ENCODE measurements at regions of chr1 and their contacts with region 1.

Region 1: DNA sequence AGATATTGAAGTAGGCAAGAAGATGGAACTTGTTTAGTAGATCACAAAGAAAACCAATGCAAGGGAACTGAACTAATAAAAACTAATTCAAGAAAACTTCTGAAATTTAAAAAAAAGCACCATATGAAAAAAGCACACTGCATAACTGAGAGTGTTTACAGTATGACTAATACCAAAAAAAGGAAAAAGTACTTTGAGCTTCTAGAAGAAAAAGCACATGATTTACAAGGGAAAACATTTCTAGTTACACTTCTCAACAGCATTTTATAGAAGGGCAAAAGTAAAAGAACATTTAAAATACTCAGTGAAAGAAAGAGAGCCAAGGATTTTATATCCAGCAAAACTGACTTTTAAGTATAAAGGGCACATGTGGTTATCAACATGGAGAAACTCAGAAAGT is 233.6 kb downstream of the RPS6KC1 start:
- DNase-seq: peak; percentile 74
- ATAC-seq: peak; percentile 81
- H3K4me3 ChIP-seq: no peak overlapping the region
- H3K27ac ChIP-seq: peak overlapping the region; percentile 50; the same call in 1 of the 2 replicates
- H3K4me1 ChIP-seq: peaks cover 7% of the 10 kb centered on the region
- H3K27me3 ChIP-seq: no peaks in the 10 kb centered on the region
- CTCF ChIP-seq: no peak
- POLR2A ChIP-seq: no peak
- RAD21 ChIP-seq: no peak

Region 2: GRCh38 chr1:213221209-213221608 is 63.4 kb before region 1 on chr1:
- CTCF ChIA-PET with region 1: no interaction called
- POLR2A ChIA-PET with region 1: no interaction called
- dilution Hi-C with region 1: no loop called
- in situ Hi-C with region 1: no loop called
- intact Hi-C with region 1: no loop called
- DNase-seq: no peak
- ATAC-seq: no peak
- H3K4me3 ChIP-seq: no peak overlapping the region
- H3K27ac ChIP-seq: no peak overlapping the region
- H3K4me1 ChIP-seq: no peaks in the 10 kb centered on the region
- H3K27me3 ChIP-seq: no peaks in the 10 kb centered on the region
- CTCF ChIP-seq: no peak
- POLR2A ChIP-seq: no peak
- RAD21 ChIP-seq: no peak

Region 3: DNA sequence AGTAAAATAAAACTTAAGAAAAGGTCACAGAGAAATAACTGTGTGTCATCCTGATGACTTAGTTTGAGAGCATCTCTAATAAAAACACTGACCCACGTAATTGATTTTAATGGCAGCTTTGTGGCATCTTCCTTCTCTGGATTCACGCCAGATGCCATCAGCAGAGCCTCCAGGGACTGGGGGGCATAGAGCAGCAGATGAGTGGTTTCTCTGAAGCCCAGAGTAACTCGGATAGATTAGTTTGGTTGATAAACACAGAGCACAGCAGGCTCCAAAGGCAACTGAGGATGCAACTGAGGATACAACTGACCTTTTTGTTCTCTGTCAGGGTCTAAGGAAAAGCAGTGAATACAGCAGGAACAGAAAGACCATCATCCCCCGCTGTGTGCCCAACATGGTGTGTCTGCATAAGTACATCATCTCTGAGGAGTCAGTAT is 52.8 kb before region 1 on chr1:
- CTCF ChIA-PET with region 1: no interaction called
- POLR2A ChIA-PET with region 1: no interaction called
- dilution Hi-C with region 1: no loop called
- in situ Hi-C with region 1: no loop called
- intact Hi-C with region 1: loop called (anchors 1 kb)
- DNase-seq: peak; percentile 48
- ATAC-seq: peak; percentile 62
- H3K4me3 ChIP-seq: no peak overlapping the region
- H3K27ac ChIP-seq: peak overlapping the region; percentile 45
- H3K4me1 ChIP-seq: peaks cover 4% of the 10 kb centered on the region
- H3K27me3 ChIP-seq: no peaks in the 10 kb centered on the region
- CTCF ChIP-seq: no peak
- POLR2A ChIP-seq: no peak
- RAD21 ChIP-seq: no peak